ENCODE measurements at regions of chr2 and their contacts with region 1.

Region 1: GRCh38 chr2:28566521-28567041 is 70.7 kb downstream of the PLB1 start:
- DNase-seq: peak; percentile 87 to 92
- ATAC-seq: peak; percentile 97 to 98
- H3K4me3 ChIP-seq: peak overlapping the region; percentile 46
- H3K27ac ChIP-seq: peak overlapping the region; percentile 77 to 89
- H3K4me1 ChIP-seq: peaks cover 22% of the 10 kb centered on the region
- CTCF ChIP-seq: peak; percentile 100
- EP300 ChIP-seq: no peak
- POLR2A ChIP-seq: 0 out of 2 replicates have a peak, but pooled peaks have one; percentile 19
- RAD21 ChIP-seq: peak; percentile 93 to 100

Region 2: GRCh38 chr2:28537036-28537435 is 29.5 kb before region 1 on chr2:
- CTCF ChIA-PET with region 1: interaction called, 12 read pairs
- POLR2A ChIA-PET with region 1: no interaction called
- DNase-seq: no peak
- ATAC-seq: no peak
- H3K4me3 ChIP-seq: no peak overlapping the region
- H3K27ac ChIP-seq: no peak overlapping the region
- H3K4me1 ChIP-seq: no peaks in the 10 kb centered on the region
- CTCF ChIP-seq: no peak
- EP300 ChIP-seq: no peak
- POLR2A ChIP-seq: no peak
- RAD21 ChIP-seq: no peak

Region 3: GRCh38 chr2:28583899-28584553 is 17.4 kb after region 1 on chr2:
- CTCF ChIA-PET with region 1: interaction called, 92 read pairs
- POLR2A ChIA-PET with region 1: interaction called, 13 read pairs
- DNase-seq: peak; percentile 94 to 99
- ATAC-seq: peak; percentile 94
- H3K4me3 ChIP-seq: peak overlapping the region; percentile 7; the same call in 1 of the 3 replicates
- H3K27ac ChIP-seq: peak overlapping the region; percentile 94 to 97
- H3K4me1 ChIP-seq: peaks cover 41% of the 10 kb centered on the region
- CTCF ChIP-seq: no peak
- EP300 ChIP-seq: peak; percentile 85 to 87; a peak in 3 of 5 replicates
- POLR2A ChIP-seq: no peak
- RAD21 ChIP-seq: peak in 1 of 2 experiments; percentile 41; a peak in 3 of 5 replicates

Region 4: GRCh38 chr2:28654978-28655320 is 88.4 kb after region 1 on chr2:
- CTCF ChIA-PET with region 1: interaction called, 10 read pairs
- POLR2A ChIA-PET with region 1: no interaction called
- DNase-seq: peak in 1 of 2 experiments; percentile 42
- ATAC-seq: peak in 1 of 2 experiments; percentile 58; a peak in 4 of 6 replicates
- H3K4me3 ChIP-seq: no peak overlapping the region
- H3K27ac ChIP-seq: peak overlapping the region in 1 of 2 experiments; percentile 56; a peak in 3 of 6 replicates
- H3K4me1 ChIP-seq: peaks cover 16% of the 10 kb centered on the region
- CTCF ChIP-seq: no peak
- EP300 ChIP-seq: no peak
- POLR2A ChIP-seq: no peak
- RAD21 ChIP-seq: no peak

Region 5: GRCh38 chr2:28709101-28709500 is 142.5 kb after region 1 on chr2:
- CTCF ChIA-PET with region 1: interaction called, 10 read pairs
- POLR2A ChIA-PET with region 1: interaction called, 7 read pairs
- DNase-seq: peak in 1 of 2 experiments; percentile 12
- ATAC-seq: no peak
- H3K4me3 ChIP-seq: no peak overlapping the region
- H3K27ac ChIP-seq: peak overlapping the region; percentile 19 to 82; a peak in 5 of 6 replicates
- H3K4me1 ChIP-seq: peaks cover 49% of the 10 kb centered on the region
- CTCF ChIP-seq: no peak
- EP300 ChIP-seq: no peak
- POLR2A ChIP-seq: no peak
- RAD21 ChIP-seq: no peak

Region 6: DNA sequence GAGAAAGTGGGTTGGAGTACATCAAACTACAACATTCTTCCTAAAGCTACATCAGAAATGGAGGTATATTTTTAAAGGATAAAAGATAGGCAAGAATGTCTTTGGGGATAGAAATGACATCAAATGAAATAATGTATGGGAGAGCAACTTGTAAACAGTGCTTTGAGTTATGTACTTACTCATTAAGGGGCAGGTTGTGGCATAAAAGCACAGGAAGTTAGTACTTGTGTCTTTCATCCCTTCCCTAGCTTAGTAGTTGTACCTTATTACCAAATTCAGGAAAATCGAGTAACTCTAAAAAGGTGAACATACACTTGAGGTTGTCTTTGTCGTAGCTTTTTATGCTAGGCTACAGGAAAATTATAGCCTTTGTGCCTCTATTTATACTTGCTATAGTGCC is 213.9 kb after region 1 on chr2:
- CTCF ChIA-PET with region 1: interaction called, 15 read pairs
- POLR2A ChIA-PET with region 1: no interaction called
- DNase-seq: no peak
- ATAC-seq: no peak
- H3K4me3 ChIP-seq: no peak overlapping the region
- H3K27ac ChIP-seq: no peak overlapping the region
- H3K4me1 ChIP-seq: no peaks in the 10 kb centered on the region
- CTCF ChIP-seq: no peak
- EP300 ChIP-seq: no peak
- POLR2A ChIP-seq: no peak
- RAD21 ChIP-seq: no peak